ENCODE measurements at regions of chrX and their contacts with region 1.

Region 1: GRCh38 chrX:23817172-23817601 is 34.2 kb downstream of the SAT1 start:
- DNase-seq: no peak
- ATAC-seq: no peak
- H3K4me3 ChIP-seq: no peak overlapping the region
- H3K27ac ChIP-seq: no peak overlapping the region
- H3K4me1 ChIP-seq: no peaks in the 10 kb centered on the region
- H3K27me3 ChIP-seq: peaks cover 0 to 2% (median 0%) of the 10 kb centered on the region in 9 donors
- CTCF ChIP-seq: no peak
- POLR2A ChIP-seq: no peak

Region 2: DNA sequence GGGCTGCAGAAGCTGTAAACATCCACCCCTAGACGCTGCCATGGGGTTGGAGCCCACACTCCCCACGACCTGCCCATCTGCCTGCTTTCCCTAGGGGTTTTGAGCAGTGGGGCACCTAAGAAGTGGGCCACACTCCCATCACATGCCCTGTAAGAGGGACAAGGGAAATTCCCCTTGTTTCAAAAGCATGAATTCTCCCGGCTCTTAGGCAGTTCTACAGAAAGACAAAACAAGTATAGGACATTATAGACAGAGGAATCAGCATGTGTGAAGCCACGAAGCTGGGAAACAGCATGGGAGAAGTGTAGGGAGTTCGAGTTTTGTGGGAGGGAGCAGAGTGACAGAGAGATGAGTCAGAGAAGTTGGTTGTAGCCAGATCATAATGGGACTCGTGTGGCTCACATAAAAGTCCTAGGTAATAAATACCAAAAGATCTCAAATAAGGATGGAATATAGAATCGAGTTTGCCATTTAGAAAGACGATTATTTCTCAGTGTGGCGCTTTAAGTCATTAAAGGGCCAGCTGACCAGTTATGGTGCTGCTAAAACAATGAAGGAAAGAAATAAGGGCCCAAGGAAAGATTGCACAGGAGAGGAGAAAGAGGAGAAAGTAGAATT is 66.7 kb after region 1 on chrX:
- intact Hi-C with region 1: loop called in 1 of 10 experiments (anchors 5 kb)
- DNase-seq: no peak
- ATAC-seq: peak in 2 of 4 donors; percentile 54 to 64
- H3K4me3 ChIP-seq: no peak overlapping the region
- H3K27ac ChIP-seq: peak overlapping the region in 1 of 12 donors; percentile 16
- H3K4me1 ChIP-seq: peaks cover 0 to 10% (median 0%) of the 10 kb centered on the region in 12 donors
- H3K27me3 ChIP-seq: no peaks in the 10 kb centered on the region
- CTCF ChIP-seq: no peak
- POLR2A ChIP-seq: no peak